Common myeloid progenitor, CD34-positive (primary cell): ENCODE measurements at regions of chr5 and their contacts with region 1.

Region 1: DNA sequence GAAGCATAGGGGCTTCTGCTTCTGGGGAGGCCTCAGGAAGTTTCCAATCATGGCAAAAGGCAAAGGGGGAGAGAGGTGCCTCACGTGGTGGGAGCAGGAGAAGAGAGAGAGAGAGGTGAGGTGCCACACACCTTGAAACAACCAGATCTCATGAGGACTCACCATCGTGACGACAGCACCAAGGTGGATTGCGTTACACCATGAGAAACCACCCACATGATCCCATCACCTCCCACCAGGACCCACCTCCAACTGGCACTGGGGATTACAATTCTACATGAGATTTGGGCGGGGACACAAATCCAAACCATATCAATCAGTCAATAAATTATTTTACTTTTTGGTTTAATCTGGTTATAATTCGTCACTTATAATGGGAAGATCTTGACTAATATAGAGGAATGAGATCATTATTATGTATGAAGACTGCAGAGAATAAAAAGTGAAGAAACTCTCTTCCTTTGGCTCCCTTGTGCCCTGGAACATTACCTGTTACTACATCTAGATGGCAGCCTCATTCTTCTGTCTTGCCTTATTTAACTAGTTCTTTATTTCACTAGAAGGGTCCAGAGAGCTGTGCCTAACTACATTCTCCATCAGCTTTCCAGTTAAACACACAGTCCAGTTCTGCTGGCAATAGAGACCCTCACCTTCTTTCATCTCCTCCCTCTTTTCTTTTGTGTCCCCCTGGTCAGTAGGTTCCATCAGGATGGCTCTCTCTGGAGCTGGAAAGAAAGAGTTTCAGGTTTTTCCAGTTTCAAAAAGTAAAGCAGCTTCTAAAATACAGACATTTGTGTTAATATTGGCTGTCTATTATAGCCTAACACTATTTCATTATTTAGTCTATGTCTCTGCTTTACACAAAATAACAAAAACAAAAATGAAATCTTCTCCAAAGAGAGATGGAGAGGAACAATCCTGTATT is 21.7 kb upstream of the SPINK7 start:
- DNase-seq: peak; percentile 14 to 48 (median 46)
- H3K4me3 ChIP-seq: no peak overlapping the region
- H3K27ac ChIP-seq: no peak overlapping the region
- H3K4me1 ChIP-seq: peaks cover 0 to 5% (median 0%) of the 10 kb centered on the region in 4 experiments
- H3K27me3 ChIP-seq: no peaks in the 10 kb centered on the region

Region 2: DNA sequence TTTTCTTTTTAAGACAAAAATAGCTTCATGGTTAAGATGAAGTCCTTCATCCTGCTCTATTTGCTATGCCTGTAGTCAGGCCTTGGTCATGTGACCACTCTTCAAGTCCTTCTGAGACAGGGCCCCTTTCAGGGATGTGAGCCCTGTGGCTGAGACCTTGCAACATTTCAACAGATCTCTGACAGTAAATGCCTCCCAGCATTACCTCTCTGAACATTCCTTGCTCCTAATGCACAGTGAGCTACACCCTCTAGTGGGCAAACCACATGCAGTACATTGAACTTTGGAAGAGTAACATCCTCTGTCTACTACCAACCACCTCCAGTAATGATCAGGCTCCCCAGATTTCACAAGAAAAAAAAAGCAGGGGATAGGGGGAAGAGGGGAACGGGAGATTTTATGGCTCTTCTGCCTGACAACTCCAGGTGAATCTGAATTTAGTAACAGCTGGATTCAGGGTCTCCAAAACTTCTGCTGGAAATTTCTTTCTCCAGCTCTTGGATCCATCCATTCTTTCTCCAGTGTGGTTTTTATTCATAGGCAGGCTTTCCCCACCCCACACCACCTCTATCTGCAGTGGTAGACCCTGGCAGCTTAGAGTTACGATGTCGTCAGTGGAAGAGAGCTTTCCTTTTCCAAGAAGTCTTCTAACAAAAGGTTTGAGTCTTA is 84.3 kb after region 1 on chr5:
- CTCF ChIA-PET with region 1: interaction called, 14 read pairs
- POLR2A ChIA-PET with region 1: no interaction called
- DNase-seq: peak; percentile 38 to 63 (median 58)
- H3K4me3 ChIP-seq: no peak overlapping the region
- H3K27ac ChIP-seq: no peak overlapping the region
- H3K4me1 ChIP-seq: peaks cover 0 to 4% (median 0%) of the 10 kb centered on the region in 4 experiments
- H3K27me3 ChIP-seq: no peaks in the 10 kb centered on the region